Naive thymus-derived CD4-positive, alpha-beta T cell (primary cell): ENCODE measurements at regions of chr6 and their contacts with region 1.

Region 1: DNA sequence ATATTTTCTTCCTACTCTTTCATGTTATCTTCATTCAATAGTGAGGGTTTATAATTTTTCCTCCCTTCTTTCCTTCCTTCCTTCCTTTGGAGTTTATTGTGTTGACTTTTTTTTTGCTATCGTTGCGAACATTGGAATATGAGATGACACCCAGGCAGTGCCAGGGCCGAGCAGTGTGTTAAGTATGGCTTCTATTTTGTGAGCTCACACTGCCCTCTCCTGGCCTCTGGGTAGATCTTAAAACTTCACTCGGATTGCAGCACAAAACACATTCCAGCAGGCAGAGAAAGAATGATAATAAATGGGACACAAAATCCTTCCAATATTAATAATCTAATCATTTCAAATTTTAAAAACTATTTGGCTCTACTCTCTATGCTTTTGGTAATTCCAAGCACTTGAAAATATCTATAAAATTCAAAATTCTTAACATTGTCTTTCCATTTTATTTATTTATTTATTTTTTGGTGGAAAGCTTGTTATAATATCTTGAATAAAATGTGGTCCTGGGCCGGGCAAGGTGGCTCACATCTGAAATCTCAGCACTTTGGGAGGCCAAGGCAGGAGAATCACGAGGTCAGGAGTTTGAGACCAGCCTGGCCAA is 147.4 kb upstream of the OLIG3 start:
- DNase-seq: peak; percentile 25 to 65 (median 57)
- ATAC-seq: peak; percentile 89
- H3K4me3 ChIP-seq: no peak overlapping the region
- H3K4me3 Mint-ChIP-seq: no peak overlapping the region
- H3K27ac ChIP-seq: no peak overlapping the region
- H3K27ac Mint-ChIP-seq: no peak overlapping the region
- H3K4me1 ChIP-seq: no peaks in the 10 kb centered on the region
- H3K4me1 Mint-ChIP-seq: peaks cover 0 to 17% (median 12%) of the 10 kb centered on the region in 7 donors
- H3K27me3 ChIP-seq: no peaks in the 10 kb centered on the region
- H3K27me3 Mint-ChIP-seq: peaks cover 0 to 13% (median 6%) of the 10 kb centered on the region in 5 donors

Region 2: DNA sequence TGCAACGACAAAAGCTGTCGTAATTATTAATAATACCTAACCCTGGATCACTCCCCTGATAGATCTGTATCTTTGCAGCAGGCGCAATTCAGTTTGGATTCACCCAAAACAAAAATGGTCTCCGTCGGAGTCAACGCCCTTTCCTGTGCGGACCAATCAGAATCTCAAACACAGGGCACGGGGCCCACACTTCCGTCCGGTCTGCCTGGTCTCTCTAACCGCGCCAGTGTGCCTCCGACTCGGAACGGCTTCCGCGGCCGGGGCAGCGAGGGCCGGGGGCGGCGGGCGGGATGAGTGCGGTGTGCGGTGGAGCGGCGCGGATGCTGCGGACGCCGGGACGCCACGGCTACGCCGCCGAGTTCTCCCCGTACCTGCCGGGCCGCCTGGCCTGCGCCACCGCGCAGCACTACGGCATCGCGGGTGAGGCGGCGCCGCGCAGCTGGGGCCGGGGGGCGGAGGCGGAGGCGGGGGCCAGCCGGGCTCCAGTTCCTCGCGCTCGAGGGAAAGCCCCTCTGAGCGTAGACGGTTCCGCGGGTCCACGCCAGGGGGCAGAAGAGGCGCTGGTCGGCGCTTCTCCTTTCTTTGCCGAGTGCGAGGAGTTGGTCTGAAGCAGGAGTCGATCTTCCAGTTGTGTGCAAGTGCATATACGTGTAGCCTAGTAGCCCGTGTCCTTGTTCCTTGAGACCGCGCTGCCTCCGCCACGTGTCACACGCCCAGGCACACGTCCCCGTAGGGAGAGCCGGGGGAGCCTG is 819.0 kb before region 1 on chr6 and contains the start of gene PEX7:
- CTCF ChIA-PET with region 1: no interaction called
- POLR2A ChIA-PET with region 1: no interaction called
- intact Hi-C with region 1: loop called in 1 of 2 experiments (anchors 10 kb)
- DNase-seq: peak; percentile 83 to 94 (median 92)
- ATAC-seq: peak; percentile 95
- H3K4me3 ChIP-seq: peak within 1 kb of the TSS; percentile 96
- H3K4me3 Mint-ChIP-seq: peak within 1 kb of the TSS; percentile 87 to 99 (median 94)
- H3K27ac ChIP-seq: peak within 1 kb of the TSS; percentile 91
- H3K27ac Mint-ChIP-seq: peak within 1 kb of the TSS; percentile 91 to 99 (median 96)
- H3K4me1 ChIP-seq: peaks cover 6 to 13% of the 10 kb centered on the region in 2 donors
- H3K4me1 Mint-ChIP-seq: peaks cover 13 to 50% (median 40%) of the 10 kb centered on the region in 7 donors
- H3K27me3 ChIP-seq: peaks cover 0 to 3% of the 10 kb centered on the region in 2 donors
- H3K27me3 Mint-ChIP-seq: peaks cover 3 to 10% (median 8%) of the 10 kb centered on the region in 5 donors
- total RNA-seq, gene PEX7: 4.0 to 6.2 (median 5.4) TPM

Region 3: DNA sequence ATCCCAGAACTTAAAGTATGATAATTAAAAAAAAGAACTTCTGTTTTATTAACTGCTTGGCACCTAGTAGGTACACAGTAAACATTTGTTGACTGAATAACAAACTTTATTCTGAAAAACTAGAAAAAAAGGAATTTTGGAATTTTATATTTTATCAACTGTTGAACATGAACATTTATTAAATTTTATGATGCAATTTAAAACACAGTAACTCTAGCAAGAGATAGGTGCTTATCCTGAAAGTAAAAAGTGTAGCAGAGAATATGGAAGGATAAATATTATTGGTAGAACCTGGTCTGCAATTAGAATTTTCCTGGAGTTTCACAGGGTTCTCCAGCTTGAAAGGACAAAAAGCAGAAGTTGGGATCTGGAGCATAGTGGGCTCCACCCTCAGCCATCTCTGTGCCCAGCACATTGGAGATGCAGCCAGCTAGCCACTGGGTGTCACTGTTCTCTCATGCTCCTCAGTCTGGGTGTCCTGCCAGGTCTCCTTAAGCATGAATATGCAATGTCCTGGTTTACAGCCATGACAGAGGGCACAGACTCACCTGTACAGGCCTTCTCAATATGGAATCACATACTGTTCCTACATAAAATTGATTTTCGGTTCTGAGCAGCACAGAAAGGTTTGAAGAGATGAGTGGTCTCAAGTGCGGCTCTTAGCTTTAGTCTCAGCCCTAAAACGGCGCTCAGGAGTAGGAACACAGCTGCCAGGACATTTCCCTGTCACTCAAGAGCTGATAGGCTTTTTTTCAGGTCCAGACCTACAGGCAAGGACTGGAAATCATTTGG is 565.1 kb before region 1 on chr6:
- CTCF ChIA-PET with region 1: no interaction called
- POLR2A ChIA-PET with region 1: no interaction called
- intact Hi-C with region 1: loop called (anchors 1 kb)
- DNase-seq: peak; percentile 4 to 50 (median 22)
- ATAC-seq: peak; percentile 95
- H3K4me3 ChIP-seq: no peak overlapping the region
- H3K4me3 Mint-ChIP-seq: no peak overlapping the region
- H3K27ac ChIP-seq: no peak overlapping the region
- H3K27ac Mint-ChIP-seq: no peak overlapping the region
- H3K4me1 ChIP-seq: no peaks in the 10 kb centered on the region
- H3K4me1 Mint-ChIP-seq: no peaks in the 10 kb centered on the region
- H3K27me3 ChIP-seq: no peaks in the 10 kb centered on the region
- H3K27me3 Mint-ChIP-seq: peaks cover 17 to 55% (median 24%) of the 10 kb centered on the region in 5 donors

Region 4: GRCh38 chr6:137277971-137278637 is 363.5 kb before region 1 on chr6:
- CTCF ChIA-PET with region 1: no interaction called
- POLR2A ChIA-PET with region 1: no interaction called
- intact Hi-C with region 1: no loop called
- DNase-seq: no peak
- ATAC-seq: no peak
- H3K4me3 ChIP-seq: no peak overlapping the region
- H3K4me3 Mint-ChIP-seq: no peak overlapping the region
- H3K27ac ChIP-seq: no peak overlapping the region
- H3K27ac Mint-ChIP-seq: no peak overlapping the region
- H3K4me1 ChIP-seq: no peaks in the 10 kb centered on the region
- H3K4me1 Mint-ChIP-seq: peaks cover 0 to 2% (median 0%) of the 10 kb centered on the region in 7 donors
- H3K27me3 ChIP-seq: no peaks in the 10 kb centered on the region
- H3K27me3 Mint-ChIP-seq: peaks cover 5 to 53% (median 16%) of the 10 kb centered on the region in 5 donors

Region 5: GRCh38 chr6:137313928-137314855 is 327.4 kb before region 1 on chr6:
- CTCF ChIA-PET with region 1: interaction called, 5 read pairs
- POLR2A ChIA-PET with region 1: no interaction called
- intact Hi-C with region 1: loop called (anchors 1 kb)
- DNase-seq: peak; percentile 9 to 57 (median 51)
- ATAC-seq: peak; percentile 90
- H3K4me3 ChIP-seq: no peak overlapping the region
- H3K4me3 Mint-ChIP-seq: no peak overlapping the region
- H3K27ac ChIP-seq: no peak overlapping the region
- H3K27ac Mint-ChIP-seq: no peak overlapping the region
- H3K4me1 ChIP-seq: no peaks in the 10 kb centered on the region
- H3K4me1 Mint-ChIP-seq: peaks cover 0 to 10% (median 3%) of the 10 kb centered on the region in 7 donors
- H3K27me3 ChIP-seq: no peaks in the 10 kb centered on the region
- H3K27me3 Mint-ChIP-seq: peaks cover 0 to 22% (median 0%) of the 10 kb centered on the region in 5 donors

Region 6: GRCh38 chr6:137443901-137444300 is 197.7 kb before region 1 on chr6:
- CTCF ChIA-PET with region 1: no interaction called
- POLR2A ChIA-PET with region 1: no interaction called
- intact Hi-C with region 1: no loop called
- DNase-seq: no peak
- ATAC-seq: no peak
- H3K4me3 ChIP-seq: no peak overlapping the region
- H3K4me3 Mint-ChIP-seq: no peak overlapping the region
- H3K27ac ChIP-seq: no peak overlapping the region
- H3K27ac Mint-ChIP-seq: no peak overlapping the region
- H3K4me1 ChIP-seq: no peaks in the 10 kb centered on the region
- H3K4me1 Mint-ChIP-seq: peaks cover 0 to 6% (median 0%) of the 10 kb centered on the region in 7 donors
- H3K27me3 ChIP-seq: no peaks in the 10 kb centered on the region
- H3K27me3 Mint-ChIP-seq: peaks cover 0 to 40% (median 0%) of the 10 kb centered on the region in 5 donors

Region 7: DNA sequence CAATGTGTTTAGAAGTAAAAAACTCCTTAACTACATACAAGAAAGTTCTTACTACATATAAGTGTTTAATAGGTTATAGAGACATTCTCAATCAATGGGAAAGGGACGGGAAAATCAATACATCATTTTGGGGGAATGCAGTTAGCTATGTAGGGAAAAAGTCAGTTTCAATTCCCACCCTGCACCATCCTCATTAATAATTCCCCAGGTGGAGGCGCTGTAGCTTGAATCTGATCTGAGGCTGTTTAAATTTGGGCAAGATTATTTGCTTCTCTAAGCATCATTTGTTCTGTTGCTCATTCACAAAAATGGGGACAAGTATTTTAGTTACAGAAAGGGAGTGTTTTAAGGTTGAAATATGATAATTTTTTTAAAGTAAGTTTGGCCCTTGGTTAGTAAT is 166.5 kb before region 1 on chr6:
- CTCF ChIA-PET with region 1: interaction called, 4 read pairs
- POLR2A ChIA-PET with region 1: no interaction called
- intact Hi-C with region 1: loop called (anchors 1 to 5 kb)
- DNase-seq: no peak
- ATAC-seq: no peak
- H3K4me3 ChIP-seq: no peak overlapping the region
- H3K4me3 Mint-ChIP-seq: no peak overlapping the region
- H3K27ac ChIP-seq: no peak overlapping the region
- H3K27ac Mint-ChIP-seq: no peak overlapping the region
- H3K4me1 ChIP-seq: no peaks in the 10 kb centered on the region
- H3K4me1 Mint-ChIP-seq: no peaks in the 10 kb centered on the region
- H3K27me3 ChIP-seq: peaks cover 0 to 4% of the 10 kb centered on the region in 2 donors
- H3K27me3 Mint-ChIP-seq: peaks cover 15 to 62% (median 27%) of the 10 kb centered on the region in 5 donors